Right ventricle myocardium superior (tissue), 1 donor: ENCODE measurements at regions of chr2 and their contacts with region 1.

Region 1: DNA sequence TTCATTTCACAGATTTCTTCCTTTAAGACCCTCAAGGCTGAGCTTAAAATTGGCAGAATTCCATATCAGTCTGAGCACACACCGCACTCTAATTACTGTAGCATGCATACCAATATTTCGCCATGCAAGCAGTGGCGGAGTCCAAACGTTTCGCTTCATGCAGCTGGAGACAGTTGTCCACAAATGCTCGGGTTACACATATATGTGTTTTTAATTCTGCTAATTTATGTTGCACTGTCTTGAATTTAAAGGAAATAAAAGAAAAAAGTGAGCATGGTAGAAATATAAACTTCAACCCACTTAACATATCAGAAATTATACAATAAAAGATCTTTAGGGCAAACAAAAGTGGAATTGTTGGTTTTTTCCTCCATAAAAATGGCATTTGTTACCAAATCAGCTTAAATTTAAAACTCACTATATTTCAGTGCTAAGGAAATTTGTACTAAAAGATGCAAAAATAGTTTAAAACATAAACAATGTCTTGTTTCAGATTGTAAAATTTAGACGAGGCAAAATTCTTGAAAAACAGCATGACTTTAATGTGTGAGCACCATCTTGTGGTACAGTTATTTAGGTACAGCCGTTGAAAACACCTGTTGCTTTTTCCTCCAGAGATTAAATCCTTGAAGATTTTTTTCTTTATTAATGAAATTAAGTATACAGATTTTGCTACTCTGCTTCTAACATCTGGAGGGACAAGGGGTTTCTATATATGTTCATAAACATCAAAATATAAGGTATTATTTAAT is 24.1 kb upstream of the KANSL1L start:
- DNase-seq: no peak
- ATAC-seq: peak; percentile 77

Region 2: GRCh38 chr2:209977386-209978239 is 217.7 kb before region 1 on chr2:
- intact Hi-C with region 1: loop called (anchors 1 kb)
- DNase-seq: no peak
- ATAC-seq: peak; percentile 43

Region 3: GRCh38 chr2:210086292-210086691 is 109.0 kb before region 1 on chr2:
- intact Hi-C with region 1: loop called (anchors 10 kb)
- DNase-seq: no peak
- ATAC-seq: no peak